Activated naive CD4-positive, alpha-beta T cell treated with anti-CD3 and anti-CD28 coated beads for 36 hours (primary cell): ENCODE measurements at regions of chr7 and their contacts with region 1.

Region 1: DNA sequence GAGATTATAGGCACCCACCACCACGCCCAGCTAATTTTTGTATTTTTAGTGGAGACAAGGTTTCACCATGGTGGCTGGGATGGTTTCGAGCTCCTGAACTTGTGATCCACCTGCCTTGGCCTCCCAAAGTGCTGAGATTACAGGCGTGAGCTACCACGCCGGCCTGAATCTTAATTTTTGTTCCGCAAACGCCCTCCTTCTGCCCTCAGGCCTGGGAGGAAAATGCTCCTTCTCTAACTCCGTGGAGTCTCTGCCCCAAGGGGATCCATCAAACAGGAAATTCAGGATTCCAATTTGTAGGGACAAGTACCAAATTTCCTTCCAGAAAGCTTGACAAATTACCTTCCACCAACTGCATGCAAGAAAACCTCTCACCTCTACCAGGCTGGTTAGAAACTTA is 43.2 kb downstream of the RBAK start:
- DNase-seq: no peak
- H3K4me3 Mint-ChIP-seq: no peak overlapping the region
- H3K27ac Mint-ChIP-seq: no peak overlapping the region
- H3K4me1 Mint-ChIP-seq: peaks cover 2% of the 10 kb centered on the region
- H3K27me3 Mint-ChIP-seq: peaks cover 5% of the 10 kb centered on the region

Region 2: DNA sequence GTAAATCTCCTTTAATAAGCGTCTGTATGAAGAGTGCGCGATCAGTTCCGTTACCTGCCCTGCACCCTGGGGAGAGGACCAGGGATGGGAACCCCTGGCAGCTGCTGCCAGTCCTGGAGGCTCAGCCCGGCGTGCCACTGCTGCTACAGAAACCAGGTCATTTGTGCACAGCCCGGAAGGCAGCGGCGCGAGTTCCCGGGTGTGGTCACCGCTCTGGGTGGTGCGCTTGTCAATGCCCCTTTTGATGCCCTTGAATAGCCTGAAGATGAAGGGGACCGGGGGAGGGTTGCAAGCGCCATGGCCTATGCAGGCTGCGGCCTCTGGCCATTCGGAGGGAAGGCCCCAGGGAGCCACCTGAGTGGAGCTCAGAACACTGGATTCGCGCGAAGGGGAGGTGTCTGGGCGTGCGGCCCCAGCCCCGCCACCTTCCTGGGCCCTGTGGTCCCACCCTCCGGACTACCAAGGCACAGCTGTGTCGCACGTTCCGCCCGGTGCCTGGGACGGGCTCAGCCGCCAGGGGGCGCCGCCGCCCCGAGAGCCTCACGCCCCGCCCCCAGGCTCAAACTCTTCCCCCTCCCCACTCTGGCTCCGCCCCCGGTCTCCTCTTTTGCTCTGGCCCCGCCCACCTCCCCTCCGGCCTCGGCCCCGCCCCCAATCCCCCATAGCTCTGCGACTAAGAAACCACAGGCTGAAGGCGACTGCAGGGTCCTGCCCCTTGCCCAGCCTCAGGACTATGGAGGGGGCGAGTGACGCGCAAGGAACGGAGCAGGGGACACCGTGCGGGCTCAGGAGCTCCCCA is 297.0 kb before region 1 on chr7:
- CTCF ChIA-PET with region 1: interaction called, 4 read pairs
- intact Hi-C with region 1: loop called (anchors 1 kb)
- DNase-seq: peak; percentile 81
- H3K4me3 Mint-ChIP-seq: no peak overlapping the region
- H3K27ac Mint-ChIP-seq: no peak overlapping the region
- H3K4me1 Mint-ChIP-seq: peaks cover 3% of the 10 kb centered on the region
- H3K27me3 Mint-ChIP-seq: no peaks in the 10 kb centered on the region